Adrenal gland (tissue), 19 donors: ENCODE measurements at regions of chr10 and their contacts with region 1.

Region 1: GRCh38 chr10:7525314-7526016 is 114.6 kb upstream of the SFMBT2 start:
- DNase-seq: peak; percentile 59 to 84 (median 75)
- H3K4me3 ChIP-seq: no peak overlapping the region
- H3K27ac ChIP-seq: no peak overlapping the region
- H3K4me1 ChIP-seq: no peaks in the 10 kb centered on the region
- H3K27me3 ChIP-seq: peaks cover 19% of the 10 kb centered on the region
- CTCF ChIP-seq: peak; percentile 65 to 94 (median 86)
- POLR2A ChIP-seq: no peak

Region 2: GRCh38 chr10:7672341-7673134 is 147.1 kb after region 1 on chr10:
- intact Hi-C with region 1: no loop called
- DNase-seq: no peak
- H3K4me3 ChIP-seq: no peak overlapping the region
- H3K27ac ChIP-seq: no peak overlapping the region
- H3K4me1 ChIP-seq: no peaks in the 10 kb centered on the region
- H3K27me3 ChIP-seq: peaks cover 4% of the 10 kb centered on the region
- CTCF ChIP-seq: no peak
- POLR2A ChIP-seq: no peak

Region 3: GRCh38 chr10:7687228-7687907 is 161.9 kb after region 1 on chr10:
- intact Hi-C with region 1: loop called (anchors 2 to 5 kb)
- DNase-seq: peak; percentile 79 to 95 (median 88)
- H3K4me3 ChIP-seq: no peak overlapping the region
- H3K27ac ChIP-seq: no peak overlapping the region
- H3K4me1 ChIP-seq: no peaks in the 10 kb centered on the region
- H3K27me3 ChIP-seq: no peaks in the 10 kb centered on the region
- CTCF ChIP-seq: peak; percentile 77 to 95 (median 92)
- POLR2A ChIP-seq: no peak

Region 4: GRCh38 chr10:9302120-9302746 is 1776.8 kb after region 1 on chr10:
- intact Hi-C with region 1: loop called in 1 of 2 experiments (anchors 10 kb)
- DNase-seq: peak in 1 of 7 donors; percentile 1
- H3K4me3 ChIP-seq: no peak overlapping the region
- H3K27ac ChIP-seq: no peak overlapping the region
- H3K4me1 ChIP-seq: no peaks in the 10 kb centered on the region
- H3K27me3 ChIP-seq: no peaks in the 10 kb centered on the region
- CTCF ChIP-seq: peak; percentile 28 to 51 (median 38)
- POLR2A ChIP-seq: no peak